ENCODE measurements at regions of chr4 and their contacts with region 1.

Region 1: DNA sequence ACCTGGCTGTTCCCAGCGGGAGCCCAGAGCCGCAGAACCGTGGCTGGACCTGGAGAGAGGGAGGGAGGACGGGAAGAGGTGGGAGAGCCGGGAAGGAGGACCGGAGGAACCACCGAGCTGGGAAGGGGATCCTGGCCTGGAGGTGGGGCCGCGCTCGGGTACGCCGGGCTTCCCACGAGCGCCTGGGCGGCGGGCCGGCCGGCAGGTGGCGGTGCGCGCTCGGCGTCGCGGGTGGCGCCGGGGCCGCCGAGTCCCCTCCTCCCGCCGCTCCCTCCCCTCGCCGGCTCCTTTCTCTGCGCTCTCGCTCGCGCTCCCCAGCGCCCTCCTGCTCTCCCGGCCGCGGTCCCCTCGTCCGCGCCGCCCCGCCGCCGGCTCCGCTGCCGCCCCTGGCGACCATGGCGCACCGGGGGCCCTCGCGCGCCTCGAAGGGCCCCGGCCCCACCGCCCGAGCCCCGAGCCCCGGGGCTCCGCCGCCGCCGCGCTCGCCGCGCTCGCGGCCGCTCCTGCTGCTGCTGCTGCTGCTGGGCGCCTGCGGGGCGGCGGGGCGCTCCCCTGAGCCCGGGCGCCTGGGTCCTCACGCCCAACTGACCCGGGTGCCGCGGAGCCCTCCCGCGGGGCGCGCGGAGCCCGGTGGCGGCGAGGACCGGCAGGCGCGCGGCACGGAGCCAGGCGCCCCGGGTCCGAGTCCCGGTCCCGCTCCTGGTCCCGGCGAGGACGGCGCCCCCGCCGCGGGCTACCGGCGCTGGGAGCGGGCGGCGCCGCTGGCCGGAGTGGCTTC is at the start of gene SORCS2:
- DNase-seq: no peak
- H3K4me3 ChIP-seq: peak within 1 kb of the TSS; percentile 51
- CTCF ChIP-seq: peak; percentile 44

Region 2: GRCh38 chr4:7067452-7068278 is 124.8 kb before region 1 on chr4 and contains the start of gene GRPEL1:
- CTCF ChIA-PET with region 1: no interaction called
- POLR2A ChIA-PET with region 1: no interaction called
- DNase-seq: peak; percentile 96
- H3K4me3 ChIP-seq: peak within 1 kb of the TSS; percentile 89
- CTCF ChIP-seq: no peak

Region 3: DNA sequence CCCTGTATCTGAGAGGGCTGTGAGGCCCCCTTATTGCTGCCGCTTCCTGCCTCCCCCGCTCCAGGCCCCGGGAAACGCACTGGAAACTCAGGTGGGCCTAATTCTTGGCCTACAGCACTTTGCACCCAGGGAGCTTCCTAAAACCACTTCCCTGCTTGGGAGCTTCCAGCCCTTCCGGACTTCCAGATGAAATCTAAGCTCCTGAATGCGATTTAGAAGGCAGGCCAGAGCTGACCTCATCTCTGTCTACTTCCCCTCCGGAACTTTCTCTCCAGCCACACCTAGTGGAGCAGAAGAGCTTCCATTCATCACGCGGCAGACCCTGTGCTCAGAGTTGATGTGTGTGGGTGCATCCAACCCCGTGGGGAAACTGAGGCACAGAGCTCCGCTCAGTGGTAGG is 84.1 kb after region 1 on chr4:
- CTCF ChIA-PET with region 1: interaction called, 11 read pairs
- POLR2A ChIA-PET with region 1: no interaction called
- DNase-seq: no peak
- H3K4me3 ChIP-seq: no peak overlapping the region
- CTCF ChIP-seq: no peak

Region 4: GRCh38 chr4:7295911-7296660 is 103.6 kb after region 1 on chr4:
- CTCF ChIA-PET with region 1: interaction called, 156 read pairs
- POLR2A ChIA-PET with region 1: no interaction called
- DNase-seq: no peak
- H3K4me3 ChIP-seq: no peak overlapping the region
- CTCF ChIP-seq: peak; percentile 79

Region 5: DNA sequence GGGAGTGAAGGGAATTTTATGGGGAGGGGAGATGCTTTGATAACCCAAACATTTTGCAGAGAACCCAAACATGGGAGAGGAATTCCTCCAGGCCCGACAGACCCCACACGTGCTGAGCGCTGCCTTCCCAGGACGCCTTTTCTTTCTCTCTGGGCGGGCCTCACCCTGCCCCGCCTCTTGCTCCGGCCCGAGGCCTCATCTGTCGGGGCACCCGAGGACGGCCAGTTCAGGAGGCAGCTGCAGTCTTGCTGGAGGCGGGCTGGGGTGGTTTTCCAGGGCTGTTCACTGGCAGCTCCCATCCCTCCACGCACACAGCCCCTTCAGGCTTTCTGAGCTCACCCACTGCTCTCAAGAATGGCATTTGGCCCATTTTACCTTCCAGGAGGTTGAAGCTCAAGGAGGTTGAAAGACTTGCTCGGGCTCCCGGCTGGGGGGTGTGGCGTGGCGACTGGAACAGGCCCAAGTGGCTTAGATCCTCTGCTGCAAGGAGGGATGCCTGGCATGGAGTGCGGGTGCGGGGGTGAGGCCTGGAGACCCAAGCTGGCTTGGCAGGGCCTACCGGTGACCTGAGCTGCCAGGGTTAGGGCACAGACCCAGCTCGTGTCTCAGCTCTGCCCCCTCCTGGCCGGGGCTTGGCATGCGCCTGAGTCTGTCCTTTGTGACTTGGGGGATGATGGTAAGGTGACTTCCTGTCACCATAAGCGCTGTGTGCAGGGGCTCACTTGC is 143.1 kb after region 1 on chr4:
- CTCF ChIA-PET with region 1: interaction called, 49 read pairs
- POLR2A ChIA-PET with region 1: interaction called, 3 read pairs
- DNase-seq: no peak
- H3K4me3 ChIP-seq: no peak overlapping the region
- CTCF ChIP-seq: peak; percentile 87